ENCODE measurements at regions of chr7 and their contacts with region 1.

Region 1: GRCh38 chr7:102236592-102237287 is 49.9 kb upstream of the SH2B2 start:
- DNase-seq: peak; percentile 61
- ATAC-seq: peak; percentile 87 to 88

Region 2: GRCh38 chr7:101602484-101603241 is 634.1 kb before region 1 on chr7:
- intact Hi-C with region 1: loop called in 1 of 2 experiments (anchors 10 kb)
- DNase-seq: peak; percentile 83
- ATAC-seq: peak; percentile 87 to 94

Region 3: GRCh38 chr7:101743241-101743994 is 493.3 kb before region 1 on chr7:
- intact Hi-C with region 1: loop called in 1 of 2 experiments (anchors 10 kb)
- DNase-seq: peak; percentile 55
- ATAC-seq: peak; percentile 58 to 81

Region 4: GRCh38 chr7:102152672-102153585 is 83.8 kb before region 1 on chr7:
- intact Hi-C with region 1: no loop called
- DNase-seq: peak; percentile 48
- ATAC-seq: peak; percentile 58 to 90

Region 5: DNA sequence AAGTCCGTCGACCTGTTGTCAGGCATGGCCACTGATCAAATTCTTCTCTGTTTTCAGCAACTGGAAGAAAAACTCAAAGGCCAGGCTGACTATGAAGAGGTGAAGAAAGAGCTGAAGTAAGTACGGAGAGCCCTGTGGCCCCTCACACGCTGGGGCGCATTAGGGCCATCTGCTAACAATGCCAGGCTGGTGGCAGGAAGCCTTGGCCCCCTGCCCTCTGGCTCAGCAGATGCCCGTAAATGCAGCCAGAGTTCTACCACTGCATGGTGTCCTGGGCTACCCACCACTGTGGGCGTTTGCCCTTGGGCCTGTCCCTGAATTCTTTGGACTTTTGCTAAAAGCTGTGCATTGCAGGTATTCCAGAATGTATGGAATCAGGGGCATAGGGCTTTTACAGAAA is 47.0 kb before region 1 on chr7:
- intact Hi-C with region 1: loop called in 1 of 2 experiments (anchors 10 kb)
- DNase-seq: no peak
- ATAC-seq: peak; percentile 45 to 82